H1 (cell line): ENCODE measurements at regions of chr7 and their contacts with region 1.

Region 1: GRCh38 chr7:74206589-74207120 is 3.2 kb upstream of the LAT2 start:
- DNase-seq: peak; percentile 63 to 99
- H3K4me3 ChIP-seq: no peak overlapping the region
- H3K27ac ChIP-seq: no peak overlapping the region
- H3K4me1 ChIP-seq: 0 out of 7 replicates have a peak, but pooled peaks cover 0 to 2% (median 0%) of the 10 kb centered on the region in 4 experiments
- H3K27me3 ChIP-seq: no peaks in the 10 kb centered on the region
- CTCF ChIP-seq: peak; percentile 93 to 99 (median 95)
- EP300 ChIP-seq: no peak
- POLR2A ChIP-seq: no peak
- RAD21 ChIP-seq: peak; percentile 82 to 89

Region 2: DNA sequence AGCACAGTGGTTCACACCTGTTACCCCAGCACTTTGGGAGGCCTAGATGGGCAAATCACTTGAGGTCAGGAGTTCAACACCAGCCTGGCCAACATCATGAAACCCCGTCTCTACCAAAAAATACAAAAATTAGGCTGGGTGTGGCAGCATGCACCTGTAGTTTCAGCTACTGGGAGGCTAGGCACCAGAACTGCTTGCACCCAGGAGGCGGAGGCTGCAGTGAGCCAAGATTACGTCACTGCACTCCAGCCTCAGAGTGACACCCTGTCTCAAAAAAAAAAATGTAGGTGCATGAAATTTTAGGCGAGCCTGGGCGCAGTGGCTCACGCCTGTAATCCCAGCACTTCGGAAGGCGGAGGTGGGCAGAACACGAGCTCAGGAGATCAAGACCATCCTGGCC is 658.8 kb before region 1 on chr7:
- CTCF ChIA-PET with region 1: no interaction called
- POLR2A ChIA-PET with region 1: no interaction called
- DNase-seq: no peak
- H3K4me3 ChIP-seq: no peak overlapping the region
- H3K27ac ChIP-seq: no peak overlapping the region
- H3K4me1 ChIP-seq: no peaks in the 10 kb centered on the region
- H3K27me3 ChIP-seq: no peaks in the 10 kb centered on the region
- CTCF ChIP-seq: no peak
- EP300 ChIP-seq: no peak
- POLR2A ChIP-seq: no peak
- RAD21 ChIP-seq: no peak

Region 3: GRCh38 chr7:74068393-74069085 is 138.1 kb before region 1 on chr7:
- CTCF ChIA-PET with region 1: interaction called, 30 read pairs
- POLR2A ChIA-PET with region 1: no interaction called
- DNase-seq: no peak
- H3K4me3 ChIP-seq: no peak overlapping the region
- H3K27ac ChIP-seq: no peak overlapping the region
- H3K4me1 ChIP-seq: peaks cover 0 to 11% (median 3%) of the 10 kb centered on the region in 4 experiments; a peak in 3 of 7 replicates
- H3K27me3 ChIP-seq: no peaks in the 10 kb centered on the region
- CTCF ChIP-seq: no peak
- EP300 ChIP-seq: no peak
- POLR2A ChIP-seq: no peak
- RAD21 ChIP-seq: no peak

Region 4: DNA sequence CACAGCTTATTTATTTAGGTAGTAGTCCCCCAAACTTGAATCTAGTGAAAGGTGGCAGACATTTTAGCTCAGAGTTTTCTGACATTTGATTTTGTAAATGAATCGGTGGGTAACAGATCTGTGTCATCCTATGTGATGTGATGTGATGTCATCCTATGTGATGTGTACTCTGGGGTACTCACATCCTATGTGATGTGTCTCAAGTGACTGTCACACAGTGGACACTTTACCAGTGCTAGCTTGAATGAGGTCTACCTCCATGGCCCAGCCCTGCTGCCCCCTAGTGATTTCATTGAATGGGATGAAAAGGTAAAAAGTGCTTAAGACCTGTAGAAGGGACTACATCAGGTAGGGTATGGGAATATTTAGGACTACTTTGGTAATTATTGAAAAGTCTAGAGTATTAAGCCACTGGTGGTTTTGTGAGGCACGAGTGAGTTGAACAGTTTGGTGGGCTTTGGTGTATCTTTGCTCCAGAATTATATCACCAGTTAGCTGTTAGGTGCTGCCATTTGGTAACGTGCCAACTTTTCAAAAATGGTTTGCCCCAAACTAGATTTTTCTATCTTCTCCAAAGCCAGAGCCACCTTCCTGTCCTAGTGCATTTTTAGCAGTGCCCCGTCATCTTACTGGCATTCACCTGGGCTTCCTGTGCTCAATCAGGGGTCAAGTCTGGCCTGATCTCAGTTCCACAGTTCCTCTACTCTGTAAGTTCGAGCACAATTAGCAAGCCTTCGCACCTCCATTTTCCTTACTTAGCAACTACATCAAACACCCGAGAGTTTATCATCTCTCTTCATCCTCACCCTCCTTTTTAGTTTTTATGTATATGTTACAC is 22.8 kb before region 1 on chr7:
- CTCF ChIA-PET with region 1: interaction called, 18 read pairs
- POLR2A ChIA-PET with region 1: interaction called, 4 read pairs
- DNase-seq: no peak
- H3K4me3 ChIP-seq: no peak overlapping the region
- H3K27ac ChIP-seq: no peak overlapping the region
- H3K4me1 ChIP-seq: peaks cover 0 to 6% (median 2%) of the 10 kb centered on the region in 4 experiments; a peak in 4 of 7 replicates
- H3K27me3 ChIP-seq: no peaks in the 10 kb centered on the region
- CTCF ChIP-seq: peak; percentile 28 to 53 (median 51)
- EP300 ChIP-seq: no peak
- POLR2A ChIP-seq: no peak
- RAD21 ChIP-seq: peak; percentile 45 to 58; a peak in 3 of 4 replicates

Region 5: GRCh38 chr7:74223711-74224510 is 17.3 kb after region 1 on chr7:
- CTCF ChIA-PET with region 1: interaction called, 71 read pairs
- POLR2A ChIA-PET with region 1: interaction called, 7 read pairs
- DNase-seq: no peak
- H3K4me3 ChIP-seq: no peak overlapping the region
- H3K27ac ChIP-seq: no peak overlapping the region; the same call in 1 of the 2 replicates
- H3K4me1 ChIP-seq: peaks cover 0 to 2% (median 0%) of the 10 kb centered on the region in 4 experiments; a peak in 3 of 7 replicates
- H3K27me3 ChIP-seq: no peaks in the 10 kb centered on the region
- CTCF ChIP-seq: no peak
- EP300 ChIP-seq: no peak
- POLR2A ChIP-seq: no peak
- RAD21 ChIP-seq: no peak

Region 6: GRCh38 chr7:74272305-74273038 is 65.8 kb after region 1 on chr7:
- CTCF ChIA-PET with region 1: interaction called, 10 read pairs
- POLR2A ChIA-PET with region 1: interaction called, 3 read pairs
- DNase-seq: no peak
- H3K4me3 ChIP-seq: no peak overlapping the region
- H3K27ac ChIP-seq: no peak overlapping the region
- H3K4me1 ChIP-seq: peaks cover 0 to 10% (median 7%) of the 10 kb centered on the region in 4 experiments; a peak in 6 of 7 replicates
- H3K27me3 ChIP-seq: no peaks in the 10 kb centered on the region; a peak in 1 of 7 replicates
- CTCF ChIP-seq: no peak
- EP300 ChIP-seq: no peak
- POLR2A ChIP-seq: no peak
- RAD21 ChIP-seq: no peak

Region 7: GRCh38 chr7:74379938-74380337 is 173.3 kb after region 1 on chr7:
- CTCF ChIA-PET with region 1: interaction called, 10 read pairs
- POLR2A ChIA-PET with region 1: no interaction called
- DNase-seq: no peak
- H3K4me3 ChIP-seq: no peak overlapping the region
- H3K27ac ChIP-seq: no peak overlapping the region
- H3K4me1 ChIP-seq: no peaks in the 10 kb centered on the region
- H3K27me3 ChIP-seq: no peaks in the 10 kb centered on the region
- CTCF ChIP-seq: no peak
- EP300 ChIP-seq: no peak
- POLR2A ChIP-seq: no peak
- RAD21 ChIP-seq: no peak

Region 8: DNA sequence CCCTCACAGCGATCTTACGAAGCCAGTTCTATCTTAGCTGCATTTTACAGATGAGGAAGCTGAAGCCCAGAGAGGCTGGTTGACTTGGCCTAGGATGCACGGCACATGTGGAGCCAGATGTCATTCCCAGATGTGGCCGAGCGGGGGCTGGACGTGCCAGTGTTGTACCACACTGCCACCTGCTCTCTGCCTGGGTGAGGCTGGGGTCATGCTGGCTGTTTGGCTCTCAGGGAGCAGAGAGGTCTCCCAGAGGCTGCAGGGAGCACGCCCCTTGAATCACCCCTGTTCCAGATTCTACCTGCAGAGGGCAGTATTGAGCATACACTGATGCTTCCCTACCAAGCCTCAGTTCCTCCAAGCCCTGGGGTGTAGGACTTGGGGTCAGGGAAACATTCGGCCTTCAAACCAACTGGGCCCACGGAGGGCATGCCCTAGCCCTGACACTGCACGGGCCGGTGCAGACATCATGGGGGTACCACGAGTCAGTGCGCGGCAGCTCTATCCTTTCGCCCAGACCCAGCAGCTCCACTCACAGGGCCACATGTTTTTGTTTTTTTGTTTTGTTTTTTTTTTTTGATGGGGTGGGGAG is 243.2 kb after region 1 on chr7:
- CTCF ChIA-PET with region 1: interaction called, 11 read pairs
- POLR2A ChIA-PET with region 1: no interaction called
- DNase-seq: peak; percentile 82 to 97
- H3K4me3 ChIP-seq: no peak overlapping the region
- H3K27ac ChIP-seq: no peak overlapping the region
- H3K4me1 ChIP-seq: peaks cover 0 to 9% (median 5%) of the 10 kb centered on the region in 4 experiments; a peak in 6 of 7 replicates
- H3K27me3 ChIP-seq: no peaks in the 10 kb centered on the region
- CTCF ChIP-seq: peak; percentile 66 to 95 (median 86)
- EP300 ChIP-seq: no peak
- POLR2A ChIP-seq: no peak
- RAD21 ChIP-seq: peak; percentile 69 to 72